Activated CD4-positive, alpha-beta T cell treated with anti-CD3 and anti-CD28 coated beads for 36 hours (primary cell): ENCODE measurements at regions of chr9 and their contacts with region 1.

Region 1: GRCh38 chr9:125706661-125707471 is at the start of gene MAPKAP1:
- DNase-seq: peak; percentile 97
- ATAC-seq: peak; percentile 100
- H3K4me3 Mint-ChIP-seq: peak within 1 kb of the TSS; percentile 86
- H3K27ac Mint-ChIP-seq: peak within 1 kb of the TSS; percentile 83
- H3K4me1 Mint-ChIP-seq: peaks cover 44% of the 10 kb centered on the region
- H3K27me3 Mint-ChIP-seq: no peaks in the 10 kb centered on the region
- total RNA-seq, gene MAPKAP1: 51.6 to 61.9 TPM

Region 2: GRCh38 chr9:125794708-125795107 is 87.8 kb after region 1 on chr9:
- CTCF ChIA-PET with region 1: no interaction called
- POLR2A ChIA-PET with region 1: no interaction called
- intact Hi-C with region 1: no loop called
- DNase-seq: no peak
- ATAC-seq: no peak
- H3K4me3 Mint-ChIP-seq: no peak overlapping the region
- H3K27ac Mint-ChIP-seq: no peak overlapping the region
- H3K4me1 Mint-ChIP-seq: no peaks in the 10 kb centered on the region
- H3K27me3 Mint-ChIP-seq: no peaks in the 10 kb centered on the region

Region 3: GRCh38 chr9:125829743-125830142 is 122.9 kb after region 1 on chr9:
- CTCF ChIA-PET with region 1: no interaction called
- POLR2A ChIA-PET with region 1: no interaction called
- intact Hi-C with region 1: loop called in 1 of 2 experiments (anchors 5 kb)
- DNase-seq: peak; percentile 70
- ATAC-seq: peak; percentile 97
- H3K4me3 Mint-ChIP-seq: peak overlapping the region; percentile 72
- H3K27ac Mint-ChIP-seq: peak overlapping the region; percentile 78
- H3K4me1 Mint-ChIP-seq: peaks cover 26% of the 10 kb centered on the region
- H3K27me3 Mint-ChIP-seq: no peaks in the 10 kb centered on the region

Region 4: DNA sequence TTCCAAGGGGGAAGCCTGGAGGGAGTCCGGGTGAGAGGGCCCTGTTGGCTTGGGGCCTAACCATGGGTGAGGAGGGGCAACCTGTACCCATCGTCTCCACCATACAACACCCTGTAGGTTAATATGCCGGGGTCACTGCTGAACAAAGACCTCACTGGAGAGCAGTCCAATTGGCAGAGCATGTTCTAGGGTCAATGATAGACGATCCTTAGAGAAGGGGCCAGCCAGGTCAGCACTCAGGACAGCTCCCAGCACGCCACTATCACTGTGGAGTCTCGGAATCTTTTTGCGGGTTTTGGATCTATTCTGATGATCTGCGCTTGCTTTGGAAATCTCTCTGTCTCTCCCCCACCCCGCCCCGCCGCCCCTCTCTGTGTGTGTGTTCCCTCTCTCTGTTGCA is 401.4 kb after region 1 on chr9:
- CTCF ChIA-PET with region 1: no interaction called
- POLR2A ChIA-PET with region 1: no interaction called
- intact Hi-C with region 1: no loop called
- DNase-seq: no peak
- ATAC-seq: no peak
- H3K4me3 Mint-ChIP-seq: no peak overlapping the region
- H3K27ac Mint-ChIP-seq: no peak overlapping the region
- H3K4me1 Mint-ChIP-seq: no peaks in the 10 kb centered on the region
- H3K27me3 Mint-ChIP-seq: peaks cover 14% of the 10 kb centered on the region

Region 5: DNA sequence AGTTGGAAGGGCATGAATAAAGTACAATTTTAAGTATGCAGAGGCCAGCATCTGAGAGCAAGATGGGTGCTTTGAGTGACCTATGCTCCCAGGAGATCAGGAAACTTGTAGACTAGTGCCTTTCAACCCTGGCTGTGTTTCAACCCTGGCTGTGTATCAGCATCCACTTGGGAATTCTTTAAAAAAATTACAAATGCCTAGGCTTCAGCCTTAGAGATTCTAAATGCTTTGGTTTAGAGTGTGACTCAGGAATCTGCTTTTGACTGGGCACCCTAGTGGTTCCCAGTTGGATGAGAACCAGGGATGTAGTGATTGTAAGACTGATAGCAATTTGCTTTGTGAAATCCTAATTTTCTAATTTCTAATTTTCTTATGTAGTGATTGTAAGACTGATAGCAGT is 1273.4 kb after region 1 on chr9:
- CTCF ChIA-PET with region 1: no interaction called
- POLR2A ChIA-PET with region 1: no interaction called
- intact Hi-C with region 1: no loop called
- DNase-seq: no peak
- ATAC-seq: no peak
- H3K4me3 Mint-ChIP-seq: no peak overlapping the region
- H3K27ac Mint-ChIP-seq: no peak overlapping the region
- H3K4me1 Mint-ChIP-seq: peaks cover 12% of the 10 kb centered on the region
- H3K27me3 Mint-ChIP-seq: peaks cover 72% of the 10 kb centered on the region